ENCODE measurements at regions of chr17 and their contacts with region 1.

Region 1: DNA sequence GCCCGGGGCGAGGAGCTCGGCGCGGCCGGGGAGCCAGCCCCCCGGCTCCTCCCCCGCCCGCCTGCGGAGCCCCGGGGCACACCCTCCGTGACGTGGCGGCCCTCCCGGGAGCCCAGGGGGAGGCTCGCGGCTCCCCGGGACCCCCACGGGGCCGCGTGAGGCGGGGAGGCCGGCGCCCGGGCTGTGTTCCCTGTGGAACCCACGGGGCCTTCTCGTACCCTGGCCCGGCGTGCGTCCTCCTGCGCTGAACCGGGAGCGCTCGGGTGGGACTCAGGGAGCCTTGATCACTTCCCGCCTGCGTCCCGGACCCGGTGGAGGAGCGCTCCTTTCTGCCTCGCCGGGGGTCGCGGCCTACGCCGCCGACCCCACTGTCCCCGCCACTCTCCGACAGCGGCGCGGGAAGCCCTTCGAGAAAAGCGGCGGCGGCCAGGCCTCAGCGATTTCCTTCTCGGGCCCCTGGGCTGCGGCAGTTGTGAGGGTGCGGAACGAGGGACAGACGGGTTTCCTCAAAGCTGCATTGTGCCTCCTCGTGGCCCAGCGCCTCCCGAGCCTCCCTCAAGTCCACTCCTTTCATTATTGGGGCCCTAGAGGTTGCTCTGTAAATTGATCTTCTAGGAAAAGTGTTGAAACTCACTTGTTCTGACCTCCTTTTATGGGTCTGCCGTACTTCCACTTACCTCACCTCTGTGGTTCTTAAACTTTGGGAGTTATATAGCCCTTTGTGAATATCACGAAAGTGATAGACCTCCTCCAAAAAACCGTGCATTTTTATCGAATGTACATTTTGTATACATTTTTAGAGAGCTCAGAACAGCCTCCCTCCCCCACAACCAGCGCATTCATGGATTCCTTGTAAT is 597 bp downstream of the LIG3 start:
- DNase-seq: peak; percentile 91 to 94 (median 91)
- H3K4me3 ChIP-seq: peak overlapping the region; percentile 32 to 87 (median 80)
- H3K27ac ChIP-seq: peak overlapping the region; percentile 95 to 98
- H3K4me1 ChIP-seq: peaks cover 14 to 29% (median 18%) of the 10 kb centered on the region in 4 experiments
- H3K27me3 ChIP-seq: no peaks in the 10 kb centered on the region

Region 2: DNA sequence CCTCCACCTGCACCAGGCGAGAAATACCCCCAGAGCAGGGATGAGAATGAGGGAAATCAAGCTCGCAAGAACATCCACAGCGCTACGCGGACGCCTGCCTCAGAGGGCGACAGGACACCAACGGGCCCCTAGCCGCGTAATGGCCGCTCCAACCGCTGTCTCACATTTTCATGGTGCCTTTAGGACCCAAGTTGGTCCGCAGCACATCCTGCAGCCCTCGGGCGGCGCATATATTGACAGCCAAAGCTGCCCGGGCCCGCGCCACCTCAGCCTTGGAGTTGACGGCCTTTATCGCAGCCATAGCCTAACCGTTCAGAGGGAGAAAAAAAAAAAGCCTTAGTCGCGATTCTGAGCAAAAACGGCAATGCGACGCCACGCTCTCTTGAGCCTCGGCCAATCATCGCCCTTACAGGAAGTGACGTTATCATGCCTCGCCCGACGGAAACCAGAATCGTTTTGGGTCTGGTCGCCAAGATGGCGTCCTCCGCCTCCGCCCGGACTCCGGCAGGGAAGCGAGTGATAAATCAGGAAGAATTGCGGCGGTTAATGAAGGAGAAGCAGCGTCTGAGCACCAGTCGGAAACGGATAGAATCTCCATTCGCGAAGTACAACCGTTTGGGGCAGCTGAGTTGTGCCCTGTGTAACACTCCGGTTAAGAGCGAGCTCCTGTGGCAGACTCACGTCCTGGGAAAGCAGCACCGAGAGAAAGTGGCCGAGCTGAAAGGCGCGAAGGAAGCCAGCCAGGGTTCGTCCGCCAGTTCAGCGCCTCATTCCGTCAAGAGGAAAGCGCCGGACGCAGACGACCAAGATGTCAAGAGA is 19.6 kb before region 1 on chr17 and contains the starts of genes CCT6B and ZNF830:
- CTCF ChIA-PET with region 1: interaction called, 3 read pairs
- POLR2A ChIA-PET with region 1: interaction called, 12 read pairs
- DNase-seq: peak; percentile 97 to 98 (median 98)
- H3K4me3 ChIP-seq: peak within 1 kb of the TSS; percentile 93 to 100 (median 100)
- H3K27ac ChIP-seq: peak within 1 kb of the TSS; percentile 96 to 98
- H3K4me1 ChIP-seq: peaks cover 12 to 24% (median 18%) of the 10 kb centered on the region in 4 experiments
- H3K27me3 ChIP-seq: no peaks in the 10 kb centered on the region

Region 3: GRCh38 chr17:34990921-34991365 is 10.0 kb after region 1 on chr17:
- CTCF ChIA-PET with region 1: interaction called, 20 read pairs
- POLR2A ChIA-PET with region 1: interaction called, 3 read pairs
- DNase-seq: peak in 1 of 3 donors; percentile 24
- H3K4me3 ChIP-seq: no peak overlapping the region
- H3K27ac ChIP-seq: no peak overlapping the region
- H3K4me1 ChIP-seq: peaks cover 0 to 14% (median 4%) of the 10 kb centered on the region in 4 experiments
- H3K27me3 ChIP-seq: no peaks in the 10 kb centered on the region